ENCODE measurements at regions of chr7 and their contacts with region 1.

Region 1: DNA sequence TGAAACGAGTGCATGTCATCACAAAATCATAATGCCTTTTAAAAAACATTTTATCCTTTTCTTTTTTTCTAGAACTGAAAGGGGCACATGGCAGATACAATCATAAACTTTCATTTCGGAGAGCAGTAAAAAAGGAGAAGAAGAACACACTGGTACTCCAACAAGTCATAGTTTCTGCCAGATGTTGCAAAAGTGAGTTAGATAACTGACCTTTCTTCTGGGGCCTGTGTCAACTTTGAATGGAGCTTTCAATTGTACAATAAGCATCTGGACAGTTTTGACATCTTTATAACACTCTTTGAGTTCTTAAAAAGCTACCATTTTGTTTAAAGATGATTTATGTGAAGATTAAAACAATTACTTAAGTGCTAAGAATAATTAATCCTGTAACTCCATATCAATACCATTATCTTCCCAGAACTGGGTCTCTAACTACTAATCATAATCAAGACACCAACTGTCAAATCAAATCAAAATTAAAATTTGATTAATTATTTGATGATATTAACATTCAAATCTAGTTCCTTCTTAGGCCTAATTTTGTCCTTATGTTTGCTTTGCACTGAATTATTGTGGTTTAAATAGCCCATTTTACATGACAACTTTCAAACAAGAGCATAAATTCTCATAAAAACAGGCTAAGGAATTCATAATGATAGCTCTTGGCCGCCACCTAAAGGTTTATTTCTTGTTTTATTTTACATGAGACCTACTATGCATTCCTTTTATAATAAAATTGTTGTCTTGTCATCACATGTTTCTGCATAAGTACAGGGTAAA is 19.5 kb upstream of the ITGB8 start:
- DNase-seq: no peak
- ATAC-seq: peak; percentile 33 to 44

Region 2: DNA sequence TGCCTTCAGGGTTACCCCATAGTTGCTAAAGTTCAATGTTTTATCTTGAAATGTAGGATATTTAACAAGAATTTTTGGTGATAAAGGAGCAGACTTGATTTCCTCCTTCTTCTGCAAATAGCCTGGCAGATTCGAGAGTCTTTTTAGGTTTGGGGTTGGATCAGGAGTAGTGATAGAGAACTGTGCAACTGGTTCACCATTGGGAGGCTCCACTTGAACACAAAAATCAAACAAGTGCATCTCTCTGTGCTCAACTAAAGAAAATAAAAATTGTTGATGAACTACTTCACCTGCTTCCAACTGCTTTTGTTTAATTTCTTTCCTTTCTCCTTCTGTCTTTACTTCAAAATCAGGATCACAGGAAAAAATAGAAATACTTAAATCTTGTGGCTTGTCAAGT is 152.5 kb before region 1 on chr7:
- intact Hi-C with region 1: loop called in 1 of 2 experiments (anchors 10 kb)
- DNase-seq: no peak
- ATAC-seq: peak; percentile 77 to 81

Region 3: DNA sequence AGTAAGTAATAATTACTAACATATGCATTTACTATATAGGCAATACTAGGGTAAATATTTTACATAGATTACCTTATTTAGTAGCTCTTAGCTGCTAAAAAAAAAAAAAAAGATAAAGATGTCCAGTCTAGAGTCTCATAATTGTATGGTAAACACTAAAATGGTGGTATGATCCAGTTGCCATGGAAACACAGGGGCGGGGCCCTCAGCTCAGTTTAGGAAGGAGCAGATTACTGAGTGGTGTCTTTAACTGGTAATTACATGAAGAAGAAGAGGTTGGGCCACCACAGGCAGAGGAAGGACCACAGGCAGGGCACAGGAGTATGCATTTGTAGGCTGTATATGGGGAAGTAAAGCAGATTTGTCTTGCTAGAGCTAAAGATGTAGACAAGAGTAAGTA is 63.2 kb after region 1 on chr7:
- intact Hi-C with region 1: no loop called
- DNase-seq: no peak
- ATAC-seq: no peak